Mammary epithelial cell (primary cell): ENCODE measurements at regions of chr3 and their contacts with region 1.

Region 1: DNA sequence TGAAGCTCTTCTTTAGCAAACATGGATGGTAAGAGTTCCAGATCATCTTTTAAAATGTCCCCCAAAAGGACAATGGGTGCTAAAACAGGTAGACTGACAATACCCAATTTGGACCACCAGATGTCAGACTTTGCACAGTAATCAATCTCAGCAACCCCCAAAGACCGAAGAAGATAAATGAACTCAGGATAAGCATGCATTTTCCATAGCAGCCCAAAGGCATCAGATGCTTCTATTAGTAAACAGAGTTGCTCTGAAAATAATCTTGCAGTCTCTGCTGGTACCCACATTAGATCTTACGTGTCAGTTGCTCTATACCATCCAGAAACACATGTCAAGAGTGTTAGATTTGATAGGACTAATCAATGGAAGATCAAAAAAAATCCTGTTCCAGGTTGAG is 20.6 kb downstream of the MYH15 start:
- DNase-seq: peak; percentile 34
- H3K4me3 ChIP-seq: no peak overlapping the region
- H3K27ac ChIP-seq: no peak overlapping the region
- H3K4me1 ChIP-seq: peaks cover 8% of the 10 kb centered on the region
- H3K27me3 ChIP-seq: no peaks in the 10 kb centered on the region
- CTCF ChIP-seq: peak; percentile 74 to 76

Region 2: DNA sequence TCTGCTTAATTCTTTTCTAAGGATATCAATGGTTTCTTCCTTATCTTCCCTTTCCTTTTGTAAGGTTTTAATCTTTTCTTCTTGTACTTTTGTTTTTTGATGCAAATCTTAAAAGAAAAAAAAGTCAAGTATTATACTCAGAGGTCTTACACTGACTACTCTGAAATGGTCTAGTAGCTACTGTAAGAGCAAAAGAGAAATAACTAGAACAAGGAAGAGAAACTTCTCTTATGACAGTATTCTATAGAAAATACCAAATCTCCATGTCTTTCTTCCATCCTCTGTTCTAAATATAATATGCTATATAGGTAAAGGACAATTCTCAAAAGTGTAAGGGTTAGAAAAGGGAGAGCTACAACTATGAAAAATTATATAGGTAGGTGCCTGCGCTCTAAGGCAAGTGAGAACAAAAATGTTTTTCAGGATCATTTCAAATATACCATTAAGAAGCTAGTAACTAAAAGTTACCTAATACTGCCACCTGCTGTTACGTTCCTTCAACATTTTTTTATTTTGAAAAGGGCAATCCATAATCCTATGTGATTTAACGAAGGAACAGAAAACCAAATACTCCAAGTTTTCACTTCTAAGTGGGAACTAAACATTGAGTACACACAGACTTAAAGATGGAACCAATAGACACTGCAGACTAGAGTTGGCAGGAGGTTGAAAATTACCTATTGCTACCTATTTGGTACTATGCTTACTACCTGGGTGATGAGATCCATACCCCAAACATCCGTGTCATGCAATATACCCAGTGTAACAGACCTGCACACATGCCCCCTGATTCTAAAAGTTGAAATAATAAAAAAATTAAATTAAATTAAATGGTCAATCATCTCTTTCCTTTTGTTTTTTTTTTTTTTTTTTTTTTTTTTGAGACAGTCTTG is 62.7 kb after region 1 on chr3:
- CTCF ChIA-PET with region 1: interaction called, 3 read pairs
- dilution Hi-C with region 1: no loop called
- in situ Hi-C with region 1: loop called (anchors 5 kb)
- intact Hi-C with region 1: loop called (anchors 1 kb)
- DNase-seq: peak; percentile 21
- H3K4me3 ChIP-seq: no peak overlapping the region
- H3K27ac ChIP-seq: no peak overlapping the region
- H3K4me1 ChIP-seq: no peaks in the 10 kb centered on the region
- H3K27me3 ChIP-seq: no peaks in the 10 kb centered on the region
- CTCF ChIP-seq: peak; percentile 31 to 46

Region 3: GRCh38 chr3:108662130-108662738 is 172.5 kb after region 1 on chr3:
- CTCF ChIA-PET with region 1: no interaction called
- dilution Hi-C with region 1: no loop called
- in situ Hi-C with region 1: no loop called
- intact Hi-C with region 1: loop called (anchors 5 kb)
- DNase-seq: peak; percentile 42
- H3K4me3 ChIP-seq: no peak overlapping the region
- H3K27ac ChIP-seq: no peak overlapping the region
- H3K4me1 ChIP-seq: no peaks in the 10 kb centered on the region
- H3K27me3 ChIP-seq: no peaks in the 10 kb centered on the region
- CTCF ChIP-seq: peak; percentile 61 to 62

Region 4: DNA sequence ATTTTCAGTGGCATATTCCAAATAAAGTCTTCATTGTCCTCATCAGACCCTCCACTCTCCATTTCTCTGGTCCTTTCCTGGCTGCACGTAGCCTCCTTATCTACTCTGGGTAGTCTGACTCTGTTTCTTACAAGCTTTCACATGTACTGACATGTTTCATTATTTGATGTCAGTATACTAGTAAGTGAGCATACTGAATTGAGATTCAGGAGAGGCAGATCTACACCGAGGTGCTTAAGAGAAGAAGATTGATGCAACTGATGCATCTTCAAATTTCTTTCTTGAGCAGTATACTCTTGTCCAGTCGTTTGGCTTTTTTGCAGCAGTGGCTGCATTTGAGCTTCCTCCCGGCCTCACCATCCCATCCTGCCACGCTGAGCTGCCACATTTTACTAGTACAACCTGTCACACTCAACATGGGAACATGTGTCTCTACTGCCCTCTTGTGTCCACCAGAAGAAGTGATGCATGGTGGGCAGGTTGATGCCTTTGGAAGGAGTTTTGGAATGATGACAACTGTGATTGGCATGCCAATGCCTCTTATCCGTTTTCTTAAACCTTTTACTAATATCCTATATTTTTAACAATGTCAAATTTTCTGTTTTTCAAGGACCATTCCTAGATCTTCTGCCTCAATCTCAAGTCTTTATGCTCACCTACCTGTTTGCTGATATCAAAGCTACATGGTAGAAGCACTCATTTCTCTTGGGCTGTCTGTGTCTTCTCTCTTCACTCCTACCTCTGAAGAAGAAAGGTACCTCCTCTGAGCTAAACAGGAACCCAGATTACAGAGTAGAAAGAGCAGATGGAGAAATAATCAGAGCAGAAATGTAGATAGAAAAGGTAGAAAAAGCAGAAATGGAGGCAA is 425.2 kb after region 1 on chr3:
- CTCF ChIA-PET with region 1: no interaction called
- dilution Hi-C with region 1: no loop called
- in situ Hi-C with region 1: no loop called
- intact Hi-C with region 1: loop called (anchors 1 kb)
- DNase-seq: peak; percentile 67
- H3K4me3 ChIP-seq: no peak overlapping the region
- H3K27ac ChIP-seq: no peak overlapping the region
- H3K4me1 ChIP-seq: peaks cover 10% of the 10 kb centered on the region
- H3K27me3 ChIP-seq: no peaks in the 10 kb centered on the region
- CTCF ChIP-seq: peak; percentile 87 to 96

Region 5: DNA sequence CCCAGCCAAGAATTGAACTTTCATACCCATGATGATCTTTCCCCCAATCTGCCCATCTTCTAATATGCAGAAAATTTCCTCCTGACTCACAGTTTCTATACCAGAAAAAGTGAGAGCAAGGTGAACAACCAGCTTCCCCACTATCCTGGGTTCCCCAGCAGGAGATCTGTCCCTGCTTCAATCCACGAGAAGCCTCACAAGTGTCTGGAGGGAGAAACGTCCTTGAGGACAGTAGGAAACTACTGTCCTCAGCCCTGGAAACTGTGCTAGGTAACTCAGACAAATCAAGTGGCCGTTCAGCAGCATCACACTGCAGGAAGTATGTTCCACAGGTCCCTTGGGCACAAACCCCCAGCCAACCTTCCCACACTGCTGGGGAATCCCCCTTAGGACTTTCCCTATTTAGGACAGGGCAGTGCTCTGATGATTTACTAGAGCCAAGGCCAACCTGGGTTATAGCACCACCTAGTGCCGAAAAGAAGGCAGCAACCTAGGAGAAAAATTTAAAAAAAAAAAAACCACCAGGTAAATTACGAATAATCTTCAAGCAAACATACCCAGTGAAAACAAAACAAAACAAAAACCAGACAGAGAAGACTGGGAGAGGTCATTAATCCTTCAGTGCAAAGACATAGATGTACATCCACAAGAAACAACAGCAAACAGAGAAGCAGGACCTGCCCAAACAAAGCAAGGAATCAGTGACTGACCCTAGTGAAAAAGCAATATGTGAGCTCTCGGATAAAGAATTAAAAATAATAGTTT is 592.2 kb after region 1 on chr3:
- CTCF ChIA-PET with region 1: no interaction called
- dilution Hi-C with region 1: no loop called
- in situ Hi-C with region 1: no loop called
- intact Hi-C with region 1: loop called (anchors 1 kb)
- DNase-seq: peak; percentile 75
- H3K4me3 ChIP-seq: no peak overlapping the region
- H3K27ac ChIP-seq: no peak overlapping the region
- H3K4me1 ChIP-seq: no peaks in the 10 kb centered on the region
- H3K27me3 ChIP-seq: no peaks in the 10 kb centered on the region
- CTCF ChIP-seq: peak; percentile 85 to 88